HepG2 (cell line): ENCODE measurements at regions of chr10 and their contacts with region 1.

Region 1: GRCh38 chr10:13371897-13372470 is 23.9 kb upstream of the SEPHS1 start:
- DNase-seq: peak; percentile 81
- ATAC-seq: peak; percentile 98
- H3K4me3 ChIP-seq: no peak overlapping the region
- H3K27ac ChIP-seq: no peak overlapping the region
- H3K4me1 ChIP-seq: peaks cover 20% of the 10 kb centered on the region
- H3K27me3 ChIP-seq: no peaks in the 10 kb centered on the region
- CTCF ChIP-seq: peak; percentile 92
- EP300 ChIP-seq: no peak
- POLR2A ChIP-seq: no peak
- RAD21 ChIP-seq: peak; percentile 89

Region 2: DNA sequence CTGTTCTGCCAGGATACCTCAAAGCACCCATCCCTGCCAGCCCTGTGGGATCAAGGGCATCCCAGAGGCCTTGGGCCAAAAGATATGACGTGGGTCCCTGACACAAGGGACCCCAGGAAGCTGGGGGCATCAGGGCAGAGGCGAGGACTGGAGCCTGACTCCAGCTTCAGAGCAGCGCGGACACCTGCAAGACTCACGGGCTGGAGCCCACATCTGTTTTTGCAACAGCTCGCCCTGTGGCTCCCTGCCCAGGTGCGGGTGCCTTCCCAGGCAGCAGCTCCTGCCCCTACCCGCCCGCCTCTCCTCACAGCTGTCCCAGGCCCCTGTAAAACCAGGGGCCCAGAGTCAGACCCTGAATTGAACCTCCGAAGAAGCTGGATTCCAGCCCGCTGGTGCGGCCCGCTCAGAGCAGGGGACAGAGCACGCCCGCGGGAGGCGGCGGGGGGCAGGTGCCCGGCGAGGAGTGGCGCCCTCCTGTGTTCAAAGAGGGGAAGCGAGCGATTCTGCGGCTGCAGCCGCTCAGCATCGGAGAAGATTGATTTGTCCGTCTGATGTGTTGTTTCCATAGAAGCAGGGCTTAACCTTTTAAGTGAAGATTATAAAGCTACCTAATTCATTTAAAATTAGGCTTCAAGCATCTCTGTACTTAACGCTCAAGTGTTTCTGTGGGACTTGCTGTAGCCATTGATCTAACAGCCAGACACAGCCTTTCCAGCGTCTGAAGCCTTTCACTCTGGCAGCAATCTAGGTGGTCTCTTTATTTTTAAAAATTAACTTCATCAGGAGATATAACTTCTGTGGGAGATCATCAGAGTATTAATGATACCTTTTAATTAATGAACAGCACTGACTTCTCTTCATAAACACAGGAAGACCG is 68.4 kb after region 1 on chr10:
- CTCF ChIA-PET with region 1: interaction called, 39 read pairs
- POLR2A ChIA-PET with region 1: interaction called, 4 read pairs
- in situ Hi-C with region 1: loop called (anchors 5 kb)
- intact Hi-C with region 1: loop called (anchors 1 kb)
- DNase-seq: peak; percentile 20
- ATAC-seq: peak; percentile 91
- H3K4me3 ChIP-seq: peak overlapping the region; percentile 40 to 76 (median 63); a peak in 5 of 6 replicates
- H3K27ac ChIP-seq: no peak overlapping the region
- H3K4me1 ChIP-seq: peaks cover 24% of the 10 kb centered on the region
- H3K27me3 ChIP-seq: peaks cover 2 to 12% of the 10 kb centered on the region in 2 experiments; a peak in 3 of 5 replicates
- CTCF ChIP-seq: peak; percentile 93
- EP300 ChIP-seq: no peak
- POLR2A ChIP-seq: no peak
- RAD21 ChIP-seq: peak; percentile 89

Region 3: DNA sequence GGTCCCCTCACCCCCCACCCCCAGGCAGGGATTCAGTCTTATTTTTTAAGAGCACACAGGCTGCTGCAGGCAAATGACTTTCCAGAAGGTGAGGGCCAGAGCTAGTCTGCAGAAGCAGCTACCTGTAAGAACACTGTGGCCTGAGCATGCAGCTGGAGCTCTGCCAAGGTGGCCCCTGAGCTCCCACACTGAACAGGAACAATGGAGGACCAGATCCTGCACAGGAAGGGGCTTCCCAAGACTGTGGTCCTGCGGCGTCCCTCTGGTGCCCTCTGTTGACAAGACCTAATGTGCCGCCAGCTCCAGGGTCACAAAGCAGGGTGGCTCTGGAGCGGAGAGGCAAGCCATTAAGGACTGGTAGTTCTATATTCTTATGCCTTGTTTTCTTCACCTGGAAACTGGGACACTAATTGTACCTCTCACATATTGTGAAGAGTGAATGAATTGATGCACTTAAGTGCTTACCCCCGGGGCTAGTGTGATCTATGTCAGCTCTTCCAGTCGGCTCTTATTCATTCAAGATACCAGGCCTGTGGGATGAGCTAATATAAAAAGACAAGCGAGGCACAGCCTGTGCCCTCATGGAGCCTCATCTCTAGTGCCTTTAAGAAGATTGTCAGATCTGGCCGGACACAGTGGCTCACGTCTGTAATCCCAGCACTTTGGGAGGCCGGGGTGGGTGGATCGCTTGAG is 164.8 kb after region 1 on chr10:
- CTCF ChIA-PET with region 1: interaction called, 18 read pairs
- POLR2A ChIA-PET with region 1: no interaction called
- in situ Hi-C with region 1: no loop called
- intact Hi-C with region 1: loop called (anchors 1 kb)
- DNase-seq: peak; percentile 65
- ATAC-seq: peak; percentile 99
- H3K4me3 ChIP-seq: no peak overlapping the region; a peak in 1 of 6 replicates
- H3K27ac ChIP-seq: no peak overlapping the region
- H3K4me1 ChIP-seq: no peaks in the 10 kb centered on the region
- H3K27me3 ChIP-seq: peaks cover 1 to 24% of the 10 kb centered on the region in 2 experiments; a peak in 3 of 5 replicates
- CTCF ChIP-seq: peak; percentile 96
- EP300 ChIP-seq: no peak
- POLR2A ChIP-seq: no peak
- RAD21 ChIP-seq: peak; percentile 76; the same call in 1 of the 2 replicates

Region 4: GRCh38 chr10:13586676-13587355 is 214.8 kb after region 1 on chr10 and contains the start of gene PRPF18:
- CTCF ChIA-PET with region 1: no interaction called
- POLR2A ChIA-PET with region 1: no interaction called
- in situ Hi-C with region 1: no loop called
- intact Hi-C with region 1: loop called (anchors 1 kb)
- DNase-seq: peak; percentile 92
- ATAC-seq: peak; percentile 97
- H3K4me3 ChIP-seq: peak within 1 kb of the TSS; percentile 69 to 95 (median 89)
- H3K27ac ChIP-seq: peak within 1 kb of the TSS; percentile 25
- H3K4me1 ChIP-seq: peaks cover 32% of the 10 kb centered on the region
- H3K27me3 ChIP-seq: peaks cover 0 to 8% of the 10 kb centered on the region in 2 experiments; a peak in 1 of 5 replicates
- CTCF ChIP-seq: peak; percentile 94
- EP300 ChIP-seq: peak in 1 of 2 experiments; percentile 19; a peak in 1 of 4 replicates
- POLR2A ChIP-seq: peak; percentile 71
- RAD21 ChIP-seq: no peak; the same call in 1 of the 2 replicates
- total RNA-seq, gene PRPF18: 17.2 and 24.7 TPM in 2 replicates